ENCODE measurements at regions of chr2 and their contacts with region 1.

Region 1: DNA sequence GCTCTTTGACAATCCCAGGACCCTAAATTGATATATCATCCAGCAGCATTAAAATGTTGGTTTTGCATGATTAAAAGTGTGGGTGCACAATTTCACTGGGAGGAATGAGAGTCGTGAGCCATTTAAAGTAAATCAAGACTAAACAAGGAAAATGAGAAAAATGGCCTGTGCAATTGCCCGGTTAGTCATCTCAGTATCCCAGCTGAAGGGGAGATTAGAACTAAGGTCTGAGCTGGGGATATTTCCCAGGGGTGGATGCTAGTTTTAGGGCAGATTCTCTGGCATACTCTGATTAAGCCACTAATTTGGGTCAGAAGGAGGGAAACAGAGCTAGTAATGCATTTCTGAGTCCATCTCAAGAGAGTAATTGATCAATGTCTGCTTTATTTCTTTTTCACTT is 177.2 kb downstream of the EN1 start:
- DNase-seq: no peak
- H3K4me3 ChIP-seq: no peak overlapping the region
- H3K27ac ChIP-seq: no peak overlapping the region
- H3K4me1 ChIP-seq: no peaks in the 10 kb centered on the region
- H3K27me3 ChIP-seq: no peaks in the 10 kb centered on the region
- CTCF ChIP-seq: no peak

Region 2: GRCh38 chr2:119838179-119838578 is 1167.9 kb after region 1 on chr2:
- CTCF ChIA-PET with region 1: no interaction called
- POLR2A ChIA-PET with region 1: interaction called, 12 read pairs
- intact Hi-C with region 1: no loop called
- DNase-seq: no peak
- H3K4me3 ChIP-seq: no peak overlapping the region
- H3K27ac ChIP-seq: no peak overlapping the region
- H3K4me1 ChIP-seq: peaks cover 14% of the 10 kb centered on the region
- H3K27me3 ChIP-seq: no peaks in the 10 kb centered on the region
- CTCF ChIP-seq: no peak